ENCODE measurements at regions of chr9 and their contacts with region 1.

Region 1: GRCh38 chr9:89473762-89474469 is 24.0 kb downstream of the SEMA4D start:
- DNase-seq: peak; percentile 89
- ATAC-seq: peak; percentile 85
- H3K4me3 ChIP-seq: no peak overlapping the region
- H3K27ac ChIP-seq: peak overlapping the region; percentile 92; the same call in 1 of the 2 replicates
- H3K4me1 ChIP-seq: peaks cover 30% of the 10 kb centered on the region
- H3K27me3 ChIP-seq: no peaks in the 10 kb centered on the region
- CTCF ChIP-seq: no peak
- POLR2A ChIP-seq: no peak
- RAD21 ChIP-seq: no peak

Region 2: GRCh38 chr9:89497978-89498851 is 24.3 kb after region 1 on chr9 and contains the start of gene SEMA4D:
- CTCF ChIA-PET with region 1: no interaction called
- POLR2A ChIA-PET with region 1: no interaction called
- dilution Hi-C with region 1: no loop called
- in situ Hi-C with region 1: no loop called
- intact Hi-C with region 1: loop called (anchors 2 kb)
- DNase-seq: peak; percentile 51
- ATAC-seq: peak; percentile 96
- H3K4me3 ChIP-seq: peak within 1 kb of the TSS; percentile 61
- H3K27ac ChIP-seq: no peak within 1 kb of the TSS
- H3K4me1 ChIP-seq: no peaks in the 10 kb centered on the region
- H3K27me3 ChIP-seq: peaks cover 18% of the 10 kb centered on the region
- CTCF ChIP-seq: no peak
- POLR2A ChIP-seq: no peak
- RAD21 ChIP-seq: no peak
- total RNA-seq, gene SEMA4D: 0.56 and 0.90 TPM in 2 replicates

Measured in IMR-90 (cell line).